T-cell (primary cell): ENCODE measurements at regions of chr1 and their contacts with region 1.

Region 1: GRCh38 chr1:8003431-8004112 is 22.5 kb downstream of the ERRFI1 start:
- DNase-seq: no peak
- ATAC-seq: no peak
- H3K4me3 ChIP-seq: no peak overlapping the region
- H3K4me3 Mint-ChIP-seq: no peak overlapping the region
- H3K27ac ChIP-seq: no peak overlapping the region
- H3K27ac Mint-ChIP-seq: no peak overlapping the region
- H3K4me1 ChIP-seq: no peaks in the 10 kb centered on the region
- H3K4me1 Mint-ChIP-seq: no peaks in the 10 kb centered on the region
- H3K27me3 ChIP-seq: no peaks in the 10 kb centered on the region
- H3K27me3 Mint-ChIP-seq: no peaks in the 10 kb centered on the region

Region 2: DNA sequence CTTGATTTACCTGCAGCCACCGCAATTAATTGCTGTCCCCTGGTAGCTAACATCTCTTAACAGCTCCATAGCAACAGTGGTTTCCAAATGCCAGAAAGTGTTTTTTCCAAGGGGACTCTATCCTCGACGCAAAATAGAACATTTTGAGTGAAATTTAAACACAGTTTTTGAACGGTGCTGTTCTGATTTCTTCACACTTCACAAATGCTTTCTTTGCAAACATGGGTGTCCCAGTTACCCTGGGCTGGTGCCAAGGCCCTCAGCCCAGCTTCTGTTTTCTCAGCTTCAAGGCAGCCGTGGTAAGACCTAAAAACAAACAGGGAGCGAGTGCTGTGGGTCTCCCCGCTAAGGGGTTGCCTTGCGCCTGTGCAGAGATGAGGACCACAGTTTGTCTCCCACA is 379.7 kb before region 1 on chr1:
- CTCF ChIA-PET with region 1: no interaction called
- POLR2A ChIA-PET with region 1: no interaction called
- DNase-seq: no peak
- ATAC-seq: no peak
- H3K4me3 ChIP-seq: no peak overlapping the region
- H3K4me3 Mint-ChIP-seq: no peak overlapping the region
- H3K27ac ChIP-seq: no peak overlapping the region
- H3K27ac Mint-ChIP-seq: no peak overlapping the region
- H3K4me1 ChIP-seq: no peaks in the 10 kb centered on the region
- H3K4me1 Mint-ChIP-seq: no peaks in the 10 kb centered on the region
- H3K27me3 ChIP-seq: peaks cover 0 to 49% of the 10 kb centered on the region in 2 experiments
- H3K27me3 Mint-ChIP-seq: peaks cover 39 to 44% of the 10 kb centered on the region in 2 donors

Region 3: GRCh38 chr1:8711151-8711550 is 707.6 kb after region 1 on chr1:
- CTCF ChIA-PET with region 1: no interaction called
- POLR2A ChIA-PET with region 1: interaction called in 1 of 2 experiments, 12 read pairs
- DNase-seq: no peak
- ATAC-seq: no peak
- H3K4me3 ChIP-seq: no peak overlapping the region
- H3K4me3 Mint-ChIP-seq: no peak overlapping the region
- H3K27ac ChIP-seq: no peak overlapping the region
- H3K27ac Mint-ChIP-seq: peak overlapping the region in 1 of 2 donors; percentile 3
- H3K4me1 ChIP-seq: peaks cover 4 to 10% of the 10 kb centered on the region in 2 experiments
- H3K4me1 Mint-ChIP-seq: peaks cover 16 to 28% (median 24%) of the 10 kb centered on the region in 3 donors
- H3K27me3 ChIP-seq: no peaks in the 10 kb centered on the region
- H3K27me3 Mint-ChIP-seq: peaks cover 4 to 15% of the 10 kb centered on the region in 2 donors